ENCODE measurements at regions of chr20 and their contacts with region 1.

Region 1: DNA sequence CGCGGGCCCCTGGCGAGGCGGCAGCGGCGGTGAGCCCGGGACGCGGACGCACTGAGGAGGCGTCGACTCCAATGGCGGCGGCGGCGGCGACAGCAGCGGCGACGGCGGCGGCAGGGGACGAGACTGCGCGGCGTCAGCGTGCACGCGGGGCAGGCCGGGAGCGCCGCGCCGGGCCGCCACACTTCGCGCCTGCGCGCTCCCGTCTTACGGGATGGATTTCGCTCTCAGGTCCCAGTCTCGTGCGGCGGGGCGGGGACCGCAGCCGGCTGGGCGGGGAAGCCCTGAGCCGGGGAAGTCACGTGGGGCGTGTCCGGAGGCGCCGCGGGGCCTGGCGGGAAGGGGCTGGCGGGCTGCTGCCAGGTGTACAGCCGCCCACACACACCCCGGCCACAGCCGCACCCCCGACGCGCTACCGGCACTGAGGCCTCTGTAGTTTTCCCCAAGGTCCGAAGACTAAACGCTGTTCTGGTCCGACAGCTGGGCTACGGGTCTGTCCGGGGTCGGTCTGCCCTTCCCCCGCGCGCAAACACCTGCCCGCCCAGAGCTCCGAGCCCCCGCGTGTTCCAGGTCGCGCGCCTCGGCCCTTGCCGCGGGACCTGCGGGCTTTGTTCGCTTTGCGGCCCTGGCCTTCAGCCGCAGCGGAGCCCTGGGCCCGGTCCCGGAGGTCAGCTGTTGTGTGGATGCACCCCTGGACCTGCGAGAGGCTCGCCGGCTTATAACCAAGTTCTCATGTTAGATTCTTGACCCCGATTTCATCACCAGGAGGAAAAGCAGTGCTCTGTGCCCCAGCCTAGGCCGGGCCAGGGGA is at the start of gene YTHDF1:
- DNase-seq: peak; percentile 94
- H3K4me3 ChIP-seq: peak within 1 kb of the TSS; percentile 72 to 91 (median 81)
- H3K27ac ChIP-seq: peak within 1 kb of the TSS; percentile 68
- H3K4me1 ChIP-seq: peaks cover 32% of the 10 kb centered on the region
- H3K27me3 ChIP-seq: peaks cover 2% of the 10 kb centered on the region
- CTCF ChIP-seq: no peak
- total RNA-seq, gene YTHDF1: 30.3 to 40.4 TPM

Region 2: DNA sequence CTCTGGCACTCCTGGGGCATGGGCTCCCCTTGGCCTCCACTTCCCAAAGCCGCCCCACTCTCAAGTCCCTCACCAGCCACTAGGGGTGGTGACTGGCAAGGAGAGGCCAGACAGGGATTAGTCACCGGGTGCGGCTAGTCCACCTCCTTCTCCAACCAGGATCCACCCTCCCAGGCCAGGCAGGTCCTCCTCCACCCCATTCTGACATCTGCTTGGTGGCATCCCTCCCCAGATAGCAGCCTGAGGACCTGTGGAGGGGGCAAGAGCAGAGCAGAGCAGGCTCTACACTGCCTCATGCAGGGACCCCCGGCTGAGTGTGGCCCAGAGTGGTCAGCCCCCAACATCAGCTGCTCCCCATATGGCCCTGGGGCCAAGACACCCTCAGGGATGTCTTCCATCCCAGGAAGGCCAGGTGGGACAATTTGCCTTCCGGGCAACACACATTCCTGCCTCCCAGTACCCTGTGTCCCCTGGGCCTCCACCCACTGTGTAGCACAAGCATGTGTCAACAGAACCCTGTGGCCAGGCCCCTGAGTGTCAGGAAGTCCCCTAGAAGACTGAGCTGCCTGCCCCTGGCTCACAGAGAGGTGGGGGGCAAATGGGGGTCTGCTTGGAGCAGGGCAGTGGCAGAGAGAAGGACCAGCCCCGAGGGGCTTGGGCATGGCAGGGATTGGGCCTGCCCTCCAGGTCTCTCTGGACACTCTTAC is 29.5 kb before region 1 on chr20:
- CTCF ChIA-PET with region 1: no interaction called
- dilution Hi-C with region 1: no loop called
- in situ Hi-C with region 1: no loop called
- intact Hi-C with region 1: loop called (anchors 1 kb)
- DNase-seq: peak; percentile 57
- H3K4me3 ChIP-seq: no peak overlapping the region
- H3K27ac ChIP-seq: no peak overlapping the region
- H3K4me1 ChIP-seq: peaks cover 7% of the 10 kb centered on the region
- H3K27me3 ChIP-seq: no peaks in the 10 kb centered on the region
- CTCF ChIP-seq: peak; percentile 34 to 68

Region 3: GRCh38 chr20:63457737-63458136 is 241.5 kb after region 1 on chr20:
- CTCF ChIA-PET with region 1: no interaction called
- dilution Hi-C with region 1: no loop called
- in situ Hi-C with region 1: no loop called
- intact Hi-C with region 1: no loop called
- DNase-seq: peak; percentile 75
- H3K4me3 ChIP-seq: no peak overlapping the region
- H3K27ac ChIP-seq: no peak overlapping the region
- H3K4me1 ChIP-seq: peaks cover 31% of the 10 kb centered on the region
- H3K27me3 ChIP-seq: peaks cover 2% of the 10 kb centered on the region
- CTCF ChIP-seq: no peak